Gastrocnemius medialis (tissue), 4 donors: ENCODE measurements at regions of chr1 and their contacts with region 1.

Region 1: DNA sequence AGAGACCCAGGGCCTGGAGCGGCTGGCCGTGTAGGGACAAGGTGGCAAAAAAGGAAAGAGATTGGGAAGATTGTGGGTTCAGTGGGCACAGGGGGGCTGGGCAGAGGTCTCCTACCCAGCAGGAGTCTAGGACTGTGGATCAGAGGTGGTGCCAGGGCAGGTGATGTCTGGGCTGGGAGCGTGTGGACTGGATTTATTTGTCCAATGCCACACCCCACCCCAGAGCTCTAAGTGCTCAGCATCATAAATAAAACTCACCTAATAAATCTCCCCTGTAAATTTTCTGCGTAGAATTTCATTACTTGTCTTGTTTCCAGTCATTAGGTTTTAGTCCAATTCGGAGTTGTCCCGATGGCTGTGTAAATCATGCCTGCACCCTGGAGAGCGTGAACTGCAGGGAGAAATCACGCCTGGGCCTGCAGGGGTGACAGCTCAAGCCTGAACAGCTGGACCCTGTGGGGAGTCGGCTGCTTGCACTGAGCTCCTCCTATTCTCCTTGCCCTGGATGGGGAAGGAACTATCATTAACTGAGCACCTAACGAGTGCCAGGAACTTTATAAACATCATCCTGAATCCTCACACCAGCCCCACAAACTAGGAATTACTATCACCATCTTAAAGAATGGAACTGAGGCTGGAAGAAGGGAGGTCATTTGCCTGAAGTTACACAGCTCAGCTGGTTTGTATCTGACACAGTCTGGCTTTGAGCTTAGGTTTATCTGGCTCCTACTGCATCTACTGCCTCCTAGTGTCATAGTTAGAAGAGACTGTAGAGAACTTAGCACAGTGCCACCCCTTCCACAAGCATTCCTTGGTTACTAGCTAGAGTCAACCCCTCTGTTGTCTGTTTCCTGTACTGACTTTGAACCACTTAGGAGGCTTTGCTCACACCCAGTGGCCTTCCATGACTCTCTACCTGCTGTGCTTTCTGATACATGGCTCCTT is 25.0 kb upstream of the POU3F1 start:
- DNase-seq: no peak
- ATAC-seq: no peak
- H3K4me3 ChIP-seq: no peak overlapping the region
- H3K27ac ChIP-seq: no peak overlapping the region
- H3K4me1 ChIP-seq: no peaks in the 10 kb centered on the region
- H3K27me3 ChIP-seq: peaks cover 0 to 16% (median 0%) of the 10 kb centered on the region in 3 donors
- CTCF ChIP-seq: no peak
- POLR2A ChIP-seq: no peak

Region 2: DNA sequence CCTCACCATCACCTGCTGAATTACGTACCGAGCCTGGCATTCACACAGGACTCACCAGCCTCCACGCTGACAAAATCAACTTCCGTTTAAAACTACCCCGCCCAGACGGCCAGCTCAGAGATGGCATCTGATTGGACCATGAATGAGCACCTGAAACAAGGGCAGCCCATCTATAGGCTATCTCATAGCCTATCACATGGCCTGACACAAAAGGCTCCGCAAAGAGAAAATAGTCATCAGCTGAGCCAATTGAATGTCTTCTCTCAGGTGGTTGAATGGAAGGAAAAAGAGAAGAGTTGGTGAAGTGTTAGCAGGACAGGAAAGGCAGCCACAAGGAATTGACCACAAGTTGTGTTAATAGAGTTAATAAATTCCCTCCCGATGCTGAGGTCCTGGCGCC is 647.8 kb before region 1 on chr1:
- in situ Hi-C with region 1: no loop called
- intact Hi-C with region 1: loop called (anchors 10 kb)
- DNase-seq: no peak
- ATAC-seq: no peak
- H3K4me3 ChIP-seq: no peak overlapping the region
- H3K27ac ChIP-seq: no peak overlapping the region
- H3K4me1 ChIP-seq: no peaks in the 10 kb centered on the region
- H3K27me3 ChIP-seq: peaks cover 5 to 15% (median 5%) of the 10 kb centered on the region in 3 donors
- CTCF ChIP-seq: no peak
- POLR2A ChIP-seq: no peak

Region 3: GRCh38 chr1:37474046-37474759 is 597.4 kb before region 1 on chr1 and contains the start of gene ZC3H12A:
- in situ Hi-C with region 1: no loop called
- intact Hi-C with region 1: no loop called
- DNase-seq: peak; percentile 79 to 92
- ATAC-seq: peak; percentile 59
- H3K4me3 ChIP-seq: peak within 1 kb of the TSS; percentile 79 to 94 (median 93)
- H3K27ac ChIP-seq: peak within 1 kb of the TSS; percentile 89 to 98 (median 97)
- H3K4me1 ChIP-seq: peaks cover 65 to 72% of the 10 kb centered on the region in 2 donors
- H3K27me3 ChIP-seq: no peaks in the 10 kb centered on the region
- CTCF ChIP-seq: no peak
- POLR2A ChIP-seq: peak; percentile 99
- total RNA-seq, gene ZC3H12A: 5.3 to 27.1 (median 8.6) TPM

Region 4: DNA sequence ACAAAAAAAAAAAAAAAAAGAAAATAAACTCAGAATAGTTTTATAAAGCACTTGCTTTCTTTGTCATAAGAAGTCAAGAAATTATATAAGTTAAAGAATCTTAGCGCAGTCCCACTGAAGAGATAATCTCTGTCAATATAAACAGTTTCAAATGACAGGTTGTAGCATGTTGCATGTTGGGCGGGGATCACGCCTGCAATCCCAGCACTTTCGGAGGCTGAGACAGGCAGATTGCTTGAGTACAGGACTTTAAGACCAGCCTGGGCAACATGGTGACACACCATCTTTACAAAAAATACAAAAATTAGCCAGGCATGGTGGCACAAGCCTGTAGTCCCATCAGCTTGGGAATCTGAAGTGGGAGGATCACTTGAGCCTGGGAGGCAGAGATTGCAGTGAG is 106.3 kb before region 1 on chr1:
- in situ Hi-C with region 1: no loop called
- intact Hi-C with region 1: no loop called
- DNase-seq: no peak
- ATAC-seq: no peak
- H3K4me3 ChIP-seq: no peak overlapping the region
- H3K27ac ChIP-seq: peak overlapping the region in 1 of 4 donors; percentile 6
- H3K4me1 ChIP-seq: no peaks in the 10 kb centered on the region
- H3K27me3 ChIP-seq: no peaks in the 10 kb centered on the region
- CTCF ChIP-seq: no peak
- POLR2A ChIP-seq: no peak

Region 5: GRCh38 chr1:38818175-38818976 is 746.8 kb after region 1 on chr1:
- in situ Hi-C with region 1: loop called in 1 of 4 experiments (anchors 25 kb)
- intact Hi-C with region 1: no loop called
- DNase-seq: no peak
- ATAC-seq: no peak
- H3K4me3 ChIP-seq: peak overlapping the region in 2 of 4 donors; percentile 12 to 49
- H3K27ac ChIP-seq: no peak overlapping the region
- H3K4me1 ChIP-seq: no peaks in the 10 kb centered on the region
- H3K27me3 ChIP-seq: peaks cover 52 to 64% (median 63%) of the 10 kb centered on the region in 3 donors
- CTCF ChIP-seq: peak; percentile 35 to 72 (median 57)
- POLR2A ChIP-seq: no peak

Region 6: GRCh38 chr1:38834937-38835827 is 763.6 kb after region 1 on chr1:
- in situ Hi-C with region 1: loop called in 1 of 4 experiments (anchors 25 kb)
- intact Hi-C with region 1: no loop called
- DNase-seq: peak in 1 of 2 donors; percentile 8
- ATAC-seq: peak; percentile 87 to 97
- H3K4me3 ChIP-seq: no peak overlapping the region
- H3K27ac ChIP-seq: no peak overlapping the region
- H3K4me1 ChIP-seq: no peaks in the 10 kb centered on the region
- H3K27me3 ChIP-seq: peaks cover 0 to 6% (median 0%) of the 10 kb centered on the region in 3 donors
- CTCF ChIP-seq: peak; percentile 52 to 79 (median 73)
- POLR2A ChIP-seq: no peak